CD4-positive, alpha-beta T cell (primary cell): ENCODE measurements at regions of chr9 and their contacts with region 1.

Region 1: GRCh38 chr9:113657703-113658544 is 194.4 kb downstream of the RGS3 start:
- DNase-seq: peak; percentile 60 to 87 (median 74)
- ATAC-seq: peak; percentile 92
- H3K4me3 ChIP-seq: no peak overlapping the region
- H3K4me3 Mint-ChIP-seq: no peak overlapping the region
- H3K27ac ChIP-seq: no peak overlapping the region
- H3K27ac Mint-ChIP-seq: no peak overlapping the region
- H3K4me1 ChIP-seq: peaks cover 10% of the 10 kb centered on the region
- H3K4me1 Mint-ChIP-seq: peaks cover 4% of the 10 kb centered on the region
- H3K27me3 ChIP-seq: no peaks in the 10 kb centered on the region
- H3K27me3 Mint-ChIP-seq: peaks cover 15% of the 10 kb centered on the region
- CTCF ChIP-seq: peak; percentile 88

Region 2: GRCh38 chr9:112844771-112845542 is 813.0 kb before region 1 on chr9:
- CTCF ChIA-PET with region 1: no interaction called
- POLR2A ChIA-PET with region 1: no interaction called
- intact Hi-C with region 1: loop called in 1 of 2 experiments (anchors 5 kb)
- DNase-seq: peak; percentile 33 to 81 (median 62)
- ATAC-seq: peak; percentile 56
- H3K4me3 ChIP-seq: no peak overlapping the region
- H3K4me3 Mint-ChIP-seq: no peak overlapping the region
- H3K27ac ChIP-seq: no peak overlapping the region
- H3K27ac Mint-ChIP-seq: no peak overlapping the region
- H3K4me1 ChIP-seq: peaks cover 5% of the 10 kb centered on the region
- H3K4me1 Mint-ChIP-seq: peaks cover 12% of the 10 kb centered on the region
- H3K27me3 ChIP-seq: no peaks in the 10 kb centered on the region
- H3K27me3 Mint-ChIP-seq: no peaks in the 10 kb centered on the region
- CTCF ChIP-seq: peak; percentile 99

Region 3: DNA sequence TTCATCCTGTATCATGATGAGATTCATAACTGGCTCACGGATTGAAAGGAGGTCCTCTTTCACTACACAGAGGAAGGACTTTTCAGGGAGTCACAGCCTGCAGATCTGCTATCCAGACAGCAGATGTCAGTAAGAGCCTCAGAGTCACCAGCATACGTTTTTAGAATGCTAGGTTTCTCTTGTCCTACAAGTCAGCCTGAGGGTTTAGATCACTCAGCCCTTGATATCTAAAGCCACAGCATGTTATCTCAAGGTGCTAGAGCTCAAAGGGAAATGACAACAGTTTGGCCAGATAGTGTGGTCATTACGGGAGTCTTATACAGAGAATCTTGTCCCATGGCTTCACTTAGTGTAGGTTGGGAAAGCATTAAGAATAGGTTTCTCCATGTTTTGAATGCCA is 736.4 kb before region 1 on chr9:
- CTCF ChIA-PET with region 1: no interaction called
- POLR2A ChIA-PET with region 1: no interaction called
- intact Hi-C with region 1: loop called in 1 of 2 experiments (anchors 10 kb)
- DNase-seq: peak in 3 of 14 experiments; percentile 3 to 20 (median 11)
- ATAC-seq: no peak
- H3K4me3 ChIP-seq: no peak overlapping the region
- H3K4me3 Mint-ChIP-seq: no peak overlapping the region
- H3K27ac ChIP-seq: no peak overlapping the region
- H3K27ac Mint-ChIP-seq: no peak overlapping the region
- H3K4me1 ChIP-seq: no peaks in the 10 kb centered on the region
- H3K4me1 Mint-ChIP-seq: no peaks in the 10 kb centered on the region
- H3K27me3 ChIP-seq: peaks cover 0 to 5% of the 10 kb centered on the region in 2 experiments
- H3K27me3 Mint-ChIP-seq: peaks cover 24% of the 10 kb centered on the region
- CTCF ChIP-seq: no peak

Region 4: DNA sequence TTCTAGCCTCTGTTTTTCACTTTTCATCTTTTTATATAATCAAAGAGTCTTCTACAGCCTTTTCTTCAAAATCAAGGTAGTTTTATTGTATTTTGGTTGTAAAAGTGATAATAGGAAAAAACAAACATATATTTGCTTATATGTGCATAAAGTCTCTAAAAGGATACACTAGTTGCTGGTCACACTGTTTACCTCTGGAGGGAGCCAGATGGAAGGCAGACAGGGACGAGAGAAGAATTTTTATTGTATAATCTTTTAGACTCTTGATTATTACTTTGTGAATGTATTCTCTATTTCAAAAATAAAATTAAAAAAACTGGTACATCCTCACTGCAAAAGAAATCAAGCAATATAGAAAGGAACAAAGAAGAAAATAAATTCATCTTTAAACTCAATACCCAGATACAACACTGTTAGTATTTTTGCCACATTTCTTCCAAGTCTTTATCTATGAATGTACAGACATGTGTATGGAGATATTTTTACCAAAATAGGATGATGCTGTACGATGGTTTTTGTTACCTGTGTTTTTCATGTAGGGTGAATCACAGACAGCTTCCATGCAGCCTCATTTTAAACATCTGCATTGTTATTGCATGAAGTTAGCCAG is 348.6 kb before region 1 on chr9:
- CTCF ChIA-PET with region 1: interaction called, 3 read pairs
- POLR2A ChIA-PET with region 1: no interaction called
- intact Hi-C with region 1: loop called in 1 of 2 experiments (anchors 1 kb)
- DNase-seq: peak in 7 of 14 experiments; percentile 1 to 56 (median 24)
- ATAC-seq: peak; percentile 46
- H3K4me3 ChIP-seq: no peak overlapping the region
- H3K4me3 Mint-ChIP-seq: no peak overlapping the region
- H3K27ac ChIP-seq: no peak overlapping the region
- H3K27ac Mint-ChIP-seq: no peak overlapping the region
- H3K4me1 ChIP-seq: no peaks in the 10 kb centered on the region
- H3K4me1 Mint-ChIP-seq: no peaks in the 10 kb centered on the region
- H3K27me3 ChIP-seq: no peaks in the 10 kb centered on the region
- H3K27me3 Mint-ChIP-seq: no peaks in the 10 kb centered on the region
- CTCF ChIP-seq: peak; percentile 56

Region 5: GRCh38 chr9:113401027-113401792 is 256.7 kb before region 1 on chr9 and contains the start of gene ALAD:
- CTCF ChIA-PET with region 1: interaction called, 6 read pairs
- POLR2A ChIA-PET with region 1: no interaction called
- intact Hi-C with region 1: loop called in 1 of 2 experiments (anchors 1 kb)
- DNase-seq: peak; percentile 98 to 100 (median 99)
- ATAC-seq: peak; percentile 98
- H3K4me3 ChIP-seq: peak within 1 kb of the TSS; percentile 98
- H3K4me3 Mint-ChIP-seq: peak within 1 kb of the TSS; percentile 98
- H3K27ac ChIP-seq: peak within 1 kb of the TSS; percentile 50 to 54
- H3K27ac Mint-ChIP-seq: peak within 1 kb of the TSS; percentile 86
- H3K4me1 ChIP-seq: peaks cover 33% of the 10 kb centered on the region
- H3K4me1 Mint-ChIP-seq: peaks cover 34% of the 10 kb centered on the region
- H3K27me3 ChIP-seq: no peaks in the 10 kb centered on the region
- H3K27me3 Mint-ChIP-seq: no peaks in the 10 kb centered on the region
- CTCF ChIP-seq: peak; percentile 93
- total RNA-seq, gene ALAD: 14.5 to 15.0 TPM

Region 6: GRCh38 chr9:113446323-113446740 is 211.6 kb before region 1 on chr9:
- CTCF ChIA-PET with region 1: interaction called, 24 read pairs
- POLR2A ChIA-PET with region 1: interaction called, 3 read pairs
- intact Hi-C with region 1: loop called (anchors 2 kb)
- DNase-seq: peak in 4 of 14 experiments; percentile 19 to 63 (median 55)
- ATAC-seq: no peak
- H3K4me3 ChIP-seq: no peak overlapping the region
- H3K4me3 Mint-ChIP-seq: no peak overlapping the region
- H3K27ac ChIP-seq: no peak overlapping the region
- H3K27ac Mint-ChIP-seq: no peak overlapping the region
- H3K4me1 ChIP-seq: no peaks in the 10 kb centered on the region
- H3K4me1 Mint-ChIP-seq: no peaks in the 10 kb centered on the region
- H3K27me3 ChIP-seq: no peaks in the 10 kb centered on the region
- H3K27me3 Mint-ChIP-seq: no peaks in the 10 kb centered on the region
- CTCF ChIP-seq: peak; percentile 95

Region 7: DNA sequence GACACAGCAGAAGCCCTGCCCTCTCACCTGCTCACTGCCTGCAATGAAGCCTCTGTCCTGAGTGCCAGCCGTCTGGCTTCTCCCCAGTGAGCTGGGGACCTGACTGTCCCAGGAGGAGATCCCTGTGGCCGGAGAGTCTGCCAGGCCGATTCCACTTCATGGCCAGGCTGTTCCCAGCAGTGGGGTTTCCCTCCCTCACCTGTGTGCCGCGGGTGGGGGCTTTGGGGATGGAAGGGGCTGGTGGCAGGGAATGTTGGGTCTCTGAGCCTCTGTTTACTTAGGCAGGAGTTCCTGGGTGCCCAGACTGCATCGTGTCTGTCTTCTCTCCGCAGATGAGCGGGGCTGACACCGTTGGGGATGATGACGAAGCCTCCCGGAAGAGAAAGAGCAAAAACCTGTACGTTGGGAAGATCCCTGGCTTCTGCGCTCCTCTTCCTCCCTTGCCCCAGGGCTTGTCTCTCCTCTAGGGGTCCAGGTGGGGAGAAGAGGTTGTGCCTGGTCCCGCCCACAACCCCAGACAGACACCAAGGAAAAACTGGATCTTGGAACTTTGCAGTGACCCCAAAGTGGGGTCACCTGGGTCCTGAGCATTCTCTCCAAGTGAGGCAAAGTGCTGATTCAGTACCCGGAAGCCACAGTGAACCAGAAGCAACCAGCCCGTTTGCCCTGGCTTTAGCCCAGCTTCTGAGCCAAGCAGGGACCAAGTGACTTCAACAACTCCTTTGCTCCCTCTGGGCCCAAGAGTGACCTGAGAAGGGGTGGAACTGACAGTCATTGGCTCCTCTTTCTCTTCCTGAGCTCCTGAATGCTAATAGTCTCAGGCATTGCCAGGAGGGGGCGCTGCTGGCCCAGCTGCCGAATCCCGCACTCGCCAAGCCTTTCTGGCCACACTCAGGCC is 66.7 kb before region 1 on chr9:
- CTCF ChIA-PET with region 1: interaction called, 5 read pairs
- POLR2A ChIA-PET with region 1: no interaction called
- intact Hi-C with region 1: loop called (anchors 2 kb)
- DNase-seq: peak in 11 of 14 experiments; percentile 20 to 69 (median 40)
- ATAC-seq: no peak
- H3K4me3 ChIP-seq: no peak overlapping the region
- H3K4me3 Mint-ChIP-seq: no peak overlapping the region
- H3K27ac ChIP-seq: no peak overlapping the region
- H3K27ac Mint-ChIP-seq: no peak overlapping the region
- H3K4me1 ChIP-seq: peaks cover 42% of the 10 kb centered on the region
- H3K4me1 Mint-ChIP-seq: peaks cover 33% of the 10 kb centered on the region
- H3K27me3 ChIP-seq: no peaks in the 10 kb centered on the region
- H3K27me3 Mint-ChIP-seq: no peaks in the 10 kb centered on the region
- CTCF ChIP-seq: peak; percentile 59